ENCODE measurements at regions of chr2 and their contacts with region 1.

Region 1: DNA sequence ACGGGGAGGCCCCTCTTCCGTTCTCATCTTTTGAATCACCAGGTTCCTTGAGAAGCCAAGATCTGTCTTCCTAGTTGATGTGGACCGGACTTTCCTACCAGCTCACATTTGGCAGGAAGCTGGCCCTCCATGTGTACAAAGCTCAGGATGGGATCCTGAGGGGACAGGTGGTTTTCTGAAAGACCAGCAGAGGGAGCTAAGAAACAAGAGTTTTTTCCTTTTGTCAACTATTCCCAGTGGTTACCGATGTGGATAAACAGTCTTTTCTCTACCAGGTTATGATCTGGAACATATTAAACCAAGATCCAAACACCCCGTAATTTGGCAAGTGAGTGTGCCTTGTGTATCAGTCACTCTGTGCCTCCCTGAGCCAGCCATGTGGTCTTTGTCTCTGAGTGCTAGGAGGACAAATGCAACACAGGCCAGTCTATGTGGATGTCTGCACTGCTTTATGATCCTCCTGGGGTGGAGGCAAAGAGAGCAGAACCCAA is 25.1 kb upstream of the ARHGAP25 start:
- DNase-seq: peak; percentile 41
- H3K4me3 ChIP-seq: no peak overlapping the region
- H3K27ac ChIP-seq: no peak overlapping the region
- H3K27me3 ChIP-seq: peaks cover 6% of the 10 kb centered on the region
- CTCF ChIP-seq: peak; percentile 80

Region 2: DNA sequence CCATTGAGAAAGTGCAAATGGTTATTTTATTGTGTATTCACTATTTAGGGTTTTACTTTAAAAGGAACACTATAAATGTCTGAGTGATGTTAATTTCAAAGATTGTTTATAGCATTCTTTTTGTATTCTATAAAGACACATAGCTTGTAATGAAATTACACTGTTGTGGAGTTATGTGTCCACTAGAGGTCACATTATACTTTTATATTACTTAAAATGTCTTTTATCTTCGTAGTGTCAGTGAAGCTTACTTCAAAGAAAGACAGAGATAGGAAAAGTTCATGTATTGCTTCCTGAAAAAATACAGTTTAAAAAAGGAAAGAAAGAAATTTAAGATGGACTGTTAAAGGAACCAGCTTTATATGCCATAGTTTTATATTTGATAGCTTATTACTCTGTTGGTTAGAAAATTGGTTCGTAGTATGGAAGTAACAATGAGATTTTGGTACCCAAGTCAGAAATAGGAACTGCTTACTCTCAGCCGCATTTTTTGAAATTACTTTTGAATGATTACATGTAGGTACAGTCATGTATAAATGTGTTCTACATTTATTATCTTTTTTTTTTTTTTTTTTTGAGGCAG is 221.6 kb before region 1 on chr2:
- CTCF ChIA-PET with region 1: interaction called, 31 read pairs
- POLR2A ChIA-PET with region 1: no interaction called
- DNase-seq: no peak
- H3K4me3 ChIP-seq: no peak overlapping the region
- H3K27ac ChIP-seq: no peak overlapping the region
- H3K27me3 ChIP-seq: no peaks in the 10 kb centered on the region
- CTCF ChIP-seq: peak; percentile 49

Region 3: DNA sequence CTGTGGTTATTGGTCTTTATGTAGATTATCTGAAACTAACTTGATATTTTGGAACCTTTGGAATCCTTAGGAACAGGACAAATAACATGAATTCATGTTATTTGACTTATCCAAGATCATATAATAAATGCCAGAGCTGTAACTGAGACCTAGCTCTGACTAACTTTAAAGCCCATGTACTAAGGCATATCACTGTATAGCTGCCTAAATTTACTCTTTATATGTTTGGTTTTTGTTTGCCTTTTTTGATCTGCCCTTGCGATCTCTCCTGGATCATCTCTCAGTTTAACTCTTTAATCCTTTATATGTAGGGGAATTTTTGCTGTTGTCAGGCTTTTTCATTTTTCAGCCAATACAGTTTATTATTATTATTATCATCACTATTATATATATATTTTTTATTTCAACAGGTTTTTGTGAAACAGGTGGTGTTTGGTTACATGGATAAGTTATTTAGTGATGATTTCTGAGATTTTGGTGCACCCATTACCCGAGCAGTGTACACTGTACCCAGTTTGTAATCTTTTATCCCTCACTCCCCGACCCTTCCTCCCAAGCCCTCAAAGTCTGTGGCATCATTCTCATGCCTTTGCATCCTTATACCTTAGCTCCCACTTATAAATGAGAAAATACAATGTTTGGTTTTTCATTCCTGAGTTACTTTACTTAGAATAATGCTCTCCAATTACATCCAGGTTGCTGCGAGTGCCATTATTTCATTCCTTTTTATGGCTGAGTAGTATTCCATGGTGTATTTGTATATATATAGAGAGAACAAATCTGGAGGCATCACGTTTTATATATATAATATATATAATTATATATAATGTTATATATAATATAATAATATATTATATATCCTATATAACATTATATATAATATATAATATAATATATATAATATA is 193.2 kb before region 1 on chr2:
- CTCF ChIA-PET with region 1: no interaction called
- POLR2A ChIA-PET with region 1: no interaction called
- DNase-seq: no peak
- H3K4me3 ChIP-seq: no peak overlapping the region
- H3K27ac ChIP-seq: no peak overlapping the region
- H3K27me3 ChIP-seq: no peaks in the 10 kb centered on the region
- CTCF ChIP-seq: no peak

Region 4: DNA sequence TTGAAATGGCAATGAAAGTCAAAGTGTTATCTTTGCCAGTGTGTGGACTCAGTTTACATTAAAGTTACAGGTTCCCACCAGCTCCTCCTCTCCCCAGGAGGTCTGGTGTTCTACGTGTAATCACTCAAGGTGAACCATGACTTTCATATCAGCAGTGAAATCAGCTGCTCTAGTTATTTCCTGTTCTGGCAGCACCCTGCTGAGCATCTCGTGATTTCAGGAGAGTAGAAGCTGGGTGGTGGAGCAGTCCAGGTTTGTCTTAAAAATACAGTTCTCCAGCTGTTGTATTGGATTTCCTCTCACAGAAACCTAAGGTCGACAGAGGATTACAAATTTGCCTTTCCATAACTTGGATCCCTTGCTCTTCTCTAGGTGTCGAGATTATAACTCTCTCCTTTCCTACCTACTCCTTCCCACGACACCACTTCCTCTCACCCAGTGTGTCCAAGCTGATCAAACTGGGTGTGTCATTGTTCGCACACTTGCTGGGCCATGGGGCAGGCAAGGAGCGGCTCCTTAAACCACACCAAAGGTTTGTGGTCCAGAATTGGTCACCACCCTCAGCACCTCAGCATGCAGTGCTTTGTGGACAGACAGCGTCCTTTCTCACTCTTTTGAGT is 12.1 kb after region 1 on chr2:
- CTCF ChIA-PET with region 1: interaction called, 21 read pairs
- POLR2A ChIA-PET with region 1: no interaction called
- DNase-seq: no peak
- H3K4me3 ChIP-seq: no peak overlapping the region
- H3K27ac ChIP-seq: no peak overlapping the region
- H3K27me3 ChIP-seq: no peaks in the 10 kb centered on the region
- CTCF ChIP-seq: no peak

Region 5: GRCh38 chr2:68901199-68901960 is 191.9 kb after region 1 on chr2:
- CTCF ChIA-PET with region 1: interaction called, 69 read pairs
- POLR2A ChIA-PET with region 1: no interaction called
- DNase-seq: no peak
- H3K4me3 ChIP-seq: no peak overlapping the region
- H3K27ac ChIP-seq: no peak overlapping the region
- H3K27me3 ChIP-seq: peaks cover 3% of the 10 kb centered on the region
- CTCF ChIP-seq: peak; percentile 45

Region 6: DNA sequence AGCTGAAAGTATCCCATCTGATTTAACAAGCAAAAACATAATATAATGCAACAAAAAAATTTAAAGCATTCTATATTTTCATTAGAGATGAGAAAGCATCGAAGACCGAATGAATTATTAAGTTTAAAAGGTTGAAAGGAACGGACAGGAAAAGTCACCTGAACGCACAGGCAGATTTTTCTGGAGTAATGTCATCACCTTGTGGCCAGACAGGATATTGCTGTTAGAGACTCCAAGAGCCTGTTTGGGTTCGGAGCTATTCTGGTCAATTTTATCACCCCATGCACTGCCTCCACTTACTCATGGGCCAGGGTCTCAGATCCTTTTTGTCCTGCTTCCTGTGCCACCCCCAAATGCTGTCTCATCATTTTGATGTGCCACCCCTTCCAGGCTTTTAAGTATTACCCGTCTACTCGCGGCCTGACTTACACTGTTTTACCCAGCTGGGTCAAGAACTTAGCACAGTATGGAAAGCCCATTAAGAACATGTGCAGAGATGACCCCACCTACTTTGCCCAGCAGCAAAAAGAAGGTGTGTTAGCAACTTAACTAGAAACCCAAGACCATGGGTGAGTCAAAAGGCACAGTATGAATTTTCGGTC is 215.9 kb after region 1 on chr2:
- CTCF ChIA-PET with region 1: interaction called, 154 read pairs
- POLR2A ChIA-PET with region 1: no interaction called
- DNase-seq: no peak
- H3K4me3 ChIP-seq: no peak overlapping the region
- H3K27ac ChIP-seq: no peak overlapping the region
- H3K27me3 ChIP-seq: peaks cover 5% of the 10 kb centered on the region
- CTCF ChIP-seq: peak; percentile 99

Measured in AG04450 (cell line).